Activated CD4-positive, alpha-beta T cell treated with anti-CD3 and anti-CD28 coated beads for 36 hours (primary cell): ENCODE measurements at regions of chr20 and their contacts with region 1.

Region 1: GRCh38 chr20:43749734-43750294 is 23.0 kb upstream of the GTSF1L start:
- DNase-seq: peak; percentile 92
- ATAC-seq: peak; percentile 10
- H3K4me3 Mint-ChIP-seq: no peak overlapping the region
- H3K27ac Mint-ChIP-seq: peak overlapping the region; percentile 81
- H3K4me1 Mint-ChIP-seq: peaks cover 42% of the 10 kb centered on the region
- H3K27me3 Mint-ChIP-seq: peaks cover 4% of the 10 kb centered on the region

Region 2: GRCh38 chr20:43448748-43449535 is 300.9 kb before region 1 on chr20:
- CTCF ChIA-PET with region 1: no interaction called
- POLR2A ChIA-PET with region 1: no interaction called
- intact Hi-C with region 1: loop called in 1 of 2 experiments (anchors 2 kb)
- DNase-seq: peak; percentile 66
- ATAC-seq: peak; percentile 69
- H3K4me3 Mint-ChIP-seq: no peak overlapping the region
- H3K27ac Mint-ChIP-seq: no peak overlapping the region
- H3K4me1 Mint-ChIP-seq: no peaks in the 10 kb centered on the region
- H3K27me3 Mint-ChIP-seq: peaks cover 23% of the 10 kb centered on the region

Region 3: DNA sequence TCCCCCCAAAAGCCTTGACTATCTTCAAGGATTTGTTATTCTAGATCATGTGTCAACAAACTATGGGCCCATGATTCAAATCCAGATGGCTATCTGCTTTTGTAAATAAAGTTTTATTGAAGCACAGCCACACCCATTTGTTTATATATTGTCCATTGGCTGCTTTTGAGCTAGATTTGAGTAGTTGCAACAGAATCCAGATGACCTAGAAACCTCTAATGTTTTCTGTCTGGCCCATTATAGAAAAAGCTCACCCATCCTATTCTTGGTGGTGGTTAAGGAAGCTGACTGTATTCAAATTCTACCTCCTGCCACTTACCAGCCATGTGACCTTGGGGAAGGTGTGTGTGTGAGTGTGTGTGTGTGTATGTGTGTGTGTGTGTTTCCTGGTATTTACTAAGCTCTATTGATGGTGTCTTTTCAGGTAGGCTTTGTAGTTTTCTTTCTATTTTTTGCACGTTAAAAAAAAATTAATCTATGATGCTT is 21.7 kb before region 1 on chr20:
- CTCF ChIA-PET with region 1: interaction called, 14 read pairs
- POLR2A ChIA-PET with region 1: no interaction called
- intact Hi-C with region 1: no loop called
- DNase-seq: no peak
- ATAC-seq: no peak
- H3K4me3 Mint-ChIP-seq: no peak overlapping the region
- H3K27ac Mint-ChIP-seq: no peak overlapping the region
- H3K4me1 Mint-ChIP-seq: peaks cover 31% of the 10 kb centered on the region
- H3K27me3 Mint-ChIP-seq: no peaks in the 10 kb centered on the region

Region 4: GRCh38 chr20:43824309-43825050 is 74.7 kb after region 1 on chr20:
- CTCF ChIA-PET with region 1: interaction called, 5 read pairs
- POLR2A ChIA-PET with region 1: no interaction called
- intact Hi-C with region 1: loop called (anchors 1 to 2 kb)
- DNase-seq: no peak
- ATAC-seq: no peak
- H3K4me3 Mint-ChIP-seq: no peak overlapping the region
- H3K27ac Mint-ChIP-seq: no peak overlapping the region
- H3K4me1 Mint-ChIP-seq: peaks cover 12% of the 10 kb centered on the region
- H3K27me3 Mint-ChIP-seq: peaks cover 1% of the 10 kb centered on the region

Region 5: DNA sequence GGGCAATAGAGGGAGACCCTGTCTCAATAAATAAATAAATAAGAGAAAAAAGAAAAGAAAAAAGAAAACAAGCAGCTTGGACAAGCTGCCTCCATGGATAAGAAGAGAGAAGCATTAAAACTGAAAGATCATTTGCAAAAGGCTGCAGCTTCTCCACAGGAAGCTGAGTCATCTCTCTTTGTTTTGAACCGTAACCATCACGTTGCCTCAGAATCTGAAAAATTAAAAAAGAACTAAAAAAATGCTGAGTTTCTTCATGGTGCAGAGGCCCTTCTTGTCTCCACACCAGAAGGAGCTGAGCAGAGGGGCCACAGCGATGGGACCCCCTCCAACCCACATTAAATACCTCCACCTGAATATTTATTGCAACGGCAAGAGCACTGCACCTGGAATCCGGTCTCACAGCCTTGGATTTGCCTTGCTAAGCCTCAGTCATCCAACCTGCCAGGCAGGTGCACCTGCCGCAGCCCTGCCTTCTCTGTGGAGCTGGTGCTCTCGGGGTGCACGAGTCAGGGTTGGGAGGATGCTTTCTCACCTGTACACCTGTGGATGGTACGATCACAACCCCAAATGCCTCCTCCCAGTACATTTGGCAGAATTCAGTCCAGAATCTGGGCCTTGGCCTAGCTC is 193.0 kb after region 1 on chr20:
- CTCF ChIA-PET with region 1: interaction called, 10 read pairs
- POLR2A ChIA-PET with region 1: no interaction called
- intact Hi-C with region 1: loop called in 1 of 2 experiments (anchors 1 kb)
- DNase-seq: peak; percentile 33
- ATAC-seq: peak; percentile 70
- H3K4me3 Mint-ChIP-seq: no peak overlapping the region
- H3K27ac Mint-ChIP-seq: peak overlapping the region; percentile 56
- H3K4me1 Mint-ChIP-seq: peaks cover 69% of the 10 kb centered on the region
- H3K27me3 Mint-ChIP-seq: peaks cover 11% of the 10 kb centered on the region

Region 6: DNA sequence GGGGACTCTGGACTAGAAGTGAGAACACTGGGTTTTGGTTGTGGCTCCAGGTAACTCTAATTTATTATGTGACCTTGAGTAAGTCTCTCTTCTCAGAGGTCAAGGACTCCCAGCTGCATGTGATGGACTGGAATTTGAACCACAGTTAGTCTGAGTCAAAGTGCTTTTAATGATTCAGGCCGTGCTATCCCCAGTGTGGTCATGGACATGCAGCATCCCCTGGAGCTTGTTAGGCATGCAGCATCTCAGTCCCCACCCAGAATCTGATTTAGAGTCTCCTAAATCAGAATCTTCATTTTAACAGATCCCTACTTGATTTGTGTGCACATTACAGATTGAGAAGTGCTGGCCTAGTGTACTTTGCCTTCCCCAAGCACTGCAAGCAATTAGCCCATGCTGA is 239.1 kb after region 1 on chr20:
- CTCF ChIA-PET with region 1: interaction called, 3 read pairs
- POLR2A ChIA-PET with region 1: interaction called, 4 read pairs
- intact Hi-C with region 1: loop called in 1 of 2 experiments (anchors 1 kb)
- DNase-seq: no peak
- ATAC-seq: peak; percentile 20
- H3K4me3 Mint-ChIP-seq: no peak overlapping the region
- H3K27ac Mint-ChIP-seq: peak overlapping the region; percentile 55
- H3K4me1 Mint-ChIP-seq: peaks cover 24% of the 10 kb centered on the region
- H3K27me3 Mint-ChIP-seq: no peaks in the 10 kb centered on the region

Region 7: DNA sequence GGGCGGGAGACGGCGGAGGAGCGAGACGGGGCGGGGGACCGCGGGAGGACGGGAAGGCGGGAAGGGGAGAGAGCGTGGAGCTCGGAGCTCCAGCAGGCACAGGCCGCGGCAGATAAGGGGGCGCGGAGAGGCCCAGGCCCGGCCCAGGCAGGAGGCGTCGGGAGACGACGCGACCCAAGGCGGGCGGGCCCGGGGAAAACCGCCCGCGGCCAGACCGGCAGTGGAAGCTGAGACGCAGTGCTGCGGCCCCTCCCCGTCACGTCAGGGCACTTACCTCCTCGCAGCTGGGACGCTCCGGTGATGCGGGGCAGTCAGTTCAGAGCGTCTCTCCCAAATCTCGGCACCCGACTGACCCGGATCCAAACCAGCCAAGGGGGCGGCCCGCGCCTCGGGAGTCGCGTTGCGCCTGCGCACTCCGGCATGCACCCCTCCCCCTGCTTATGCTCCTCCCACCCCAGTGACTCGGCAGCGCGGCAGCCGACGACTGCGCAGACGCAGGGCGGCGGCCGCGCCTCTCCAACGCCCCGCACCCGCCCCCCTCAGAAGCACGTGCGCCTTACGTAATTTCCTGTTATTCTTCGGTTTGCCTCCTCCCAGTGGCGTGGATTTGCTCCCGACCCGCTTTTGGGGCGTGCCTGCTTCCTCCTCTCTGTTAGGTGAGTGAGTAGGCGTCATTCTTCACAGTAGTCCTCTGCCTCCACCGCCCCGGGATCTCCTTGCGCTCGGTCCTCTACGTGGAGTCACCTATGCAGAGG is 460.8 kb after region 1 on chr20 and contains the start of gene OSER1:
- CTCF ChIA-PET with region 1: no interaction called
- POLR2A ChIA-PET with region 1: no interaction called
- intact Hi-C with region 1: loop called in 1 of 2 experiments (anchors 5 kb)
- DNase-seq: peak; percentile 98
- ATAC-seq: peak; percentile 82
- H3K4me3 Mint-ChIP-seq: peak within 1 kb of the TSS; percentile 94
- H3K27ac Mint-ChIP-seq: peak within 1 kb of the TSS; percentile 92
- H3K4me1 Mint-ChIP-seq: peaks cover 48% of the 10 kb centered on the region
- H3K27me3 Mint-ChIP-seq: no peaks in the 10 kb centered on the region
- total RNA-seq, gene OSER1: 19.9 to 22.5 TPM